Left ventricle myocardium inferior (tissue), 1 donor: ENCODE measurements at regions of chr11 and their contacts with region 1.

Region 1: DNA sequence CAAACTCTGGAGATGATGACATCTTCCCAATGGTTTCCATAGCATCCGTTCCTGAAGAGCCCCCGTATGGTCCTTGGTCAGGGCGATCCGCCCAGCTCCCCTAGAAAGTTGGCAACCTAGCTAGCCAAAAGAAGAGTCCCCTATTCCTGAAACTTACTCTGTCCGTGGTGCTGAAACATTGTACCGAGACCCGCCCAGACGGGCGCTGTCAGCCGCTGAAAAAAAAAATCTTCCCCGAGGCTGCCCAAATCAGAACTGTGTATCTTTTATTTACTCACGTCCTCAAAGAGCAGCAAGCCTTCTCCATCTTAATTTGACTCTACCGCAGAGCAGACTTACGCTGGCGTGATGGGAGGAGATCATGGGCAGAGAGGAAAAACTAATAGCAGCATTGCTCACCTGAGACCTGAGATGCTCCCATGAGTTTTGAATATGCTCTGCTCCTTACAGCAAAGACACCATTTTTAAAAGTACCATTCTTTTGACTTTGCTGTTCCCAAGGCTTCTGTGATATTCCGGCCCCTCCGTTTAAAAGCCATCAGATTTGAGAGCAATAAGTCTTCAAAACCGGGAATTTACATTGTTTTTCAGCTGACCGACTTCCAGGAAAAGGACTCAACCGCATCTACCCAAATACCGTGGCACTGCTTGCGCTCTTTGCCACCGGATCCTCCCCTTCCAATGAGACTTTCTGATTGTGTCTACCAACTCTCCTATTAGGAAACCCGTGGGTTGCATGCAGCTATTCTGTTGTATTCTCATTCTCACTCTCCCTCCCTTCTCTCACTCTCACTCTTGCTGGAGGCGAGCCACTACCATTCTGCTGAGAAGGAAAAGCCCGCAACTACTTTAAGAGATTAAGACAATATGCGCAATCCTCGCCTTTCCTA is at the start of gene SLC17A6:
- DNase-seq: no peak
- H3K4me3 ChIP-seq: no peak within 1 kb of the TSS
- H3K27ac ChIP-seq: no peak within 1 kb of the TSS
- H3K4me1 ChIP-seq: peaks cover 11% of the 10 kb centered on the region
- H3K27me3 ChIP-seq: peaks cover 85% of the 10 kb centered on the region
- CTCF ChIP-seq: no peak
- total RNA-seq, gene SLC17A6: not detected

Region 2: DNA sequence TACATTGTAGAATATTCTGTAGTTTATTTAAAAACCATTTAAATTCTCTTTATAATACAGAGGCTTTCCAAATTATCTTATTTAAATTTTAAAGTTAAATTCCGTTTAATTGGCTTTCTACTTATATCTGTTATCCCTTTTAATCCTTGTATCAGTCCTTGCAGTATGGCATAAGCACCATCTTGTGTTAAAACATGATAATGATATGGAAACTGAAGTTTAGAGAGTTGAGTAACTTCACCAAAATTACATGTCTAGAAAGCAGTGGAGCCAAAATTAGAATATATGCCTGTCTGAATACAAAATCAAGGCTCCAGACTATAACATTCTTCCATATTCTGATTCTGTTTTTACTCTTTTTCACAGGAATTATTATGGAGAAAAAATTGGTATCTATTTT is 88.0 kb before region 1 on chr11:
- intact Hi-C with region 1: no loop called
- DNase-seq: no peak
- H3K4me3 ChIP-seq: no peak overlapping the region
- H3K27ac ChIP-seq: no peak overlapping the region
- H3K4me1 ChIP-seq: peaks cover 5% of the 10 kb centered on the region
- H3K27me3 ChIP-seq: no peaks in the 10 kb centered on the region
- CTCF ChIP-seq: no peak

Region 3: GRCh38 chr11:22432291-22433093 is 94.7 kb after region 1 on chr11:
- intact Hi-C with region 1: no loop called
- DNase-seq: peak; percentile 40
- H3K4me3 ChIP-seq: peak overlapping the region; percentile 66
- H3K27ac ChIP-seq: peak overlapping the region; percentile 67
- H3K4me1 ChIP-seq: peaks cover 17% of the 10 kb centered on the region
- H3K27me3 ChIP-seq: peaks cover 15% of the 10 kb centered on the region
- CTCF ChIP-seq: no peak

Region 4: DNA sequence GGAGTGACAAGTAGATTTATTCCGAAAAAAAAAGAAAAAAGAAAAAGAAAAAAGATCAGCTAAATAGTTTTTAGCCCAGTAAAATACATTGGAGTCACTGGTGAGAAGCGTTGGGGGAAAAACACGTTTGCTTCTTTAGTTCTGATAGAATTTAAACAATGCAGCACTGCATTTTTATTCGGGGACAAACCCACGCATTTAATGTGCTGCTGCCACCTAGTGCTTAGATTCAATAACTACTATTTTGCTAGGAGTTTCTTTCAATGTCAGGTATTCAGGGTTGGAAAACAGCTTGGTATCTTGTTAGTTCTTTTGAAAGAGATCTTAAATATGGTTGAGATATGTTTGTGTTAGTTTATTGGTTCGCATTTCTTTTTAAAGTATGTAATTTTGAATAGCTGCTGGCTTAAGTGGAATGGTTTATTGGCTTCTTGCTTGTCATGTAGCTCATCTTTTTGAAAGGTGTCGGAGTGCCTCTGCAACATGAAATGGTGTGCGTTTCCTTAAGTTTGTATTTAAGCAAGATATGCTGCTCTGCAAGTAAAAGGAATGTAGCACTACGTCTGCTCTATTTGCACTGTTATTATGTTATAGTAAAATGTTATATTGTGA is 449.8 kb after region 1 on chr11:
- intact Hi-C with region 1: loop called (anchors 5 kb)
- DNase-seq: no peak
- H3K4me3 ChIP-seq: no peak overlapping the region
- H3K27ac ChIP-seq: no peak overlapping the region
- H3K4me1 ChIP-seq: peaks cover 4% of the 10 kb centered on the region
- H3K27me3 ChIP-seq: no peaks in the 10 kb centered on the region
- CTCF ChIP-seq: peak; percentile 84